ENCODE measurements at regions of chr18 and their contacts with region 1.

Region 1: GRCh38 chr18:65257157-65257556 is 493.7 kb upstream of the CDH7 start:
- DNase-seq: no peak
- ATAC-seq: no peak
- H3K4me3 ChIP-seq: no peak overlapping the region
- H3K27ac ChIP-seq: no peak overlapping the region
- H3K4me1 ChIP-seq: no peaks in the 10 kb centered on the region
- H3K27me3 ChIP-seq: no peaks in the 10 kb centered on the region
- CTCF ChIP-seq: no peak

Region 2: DNA sequence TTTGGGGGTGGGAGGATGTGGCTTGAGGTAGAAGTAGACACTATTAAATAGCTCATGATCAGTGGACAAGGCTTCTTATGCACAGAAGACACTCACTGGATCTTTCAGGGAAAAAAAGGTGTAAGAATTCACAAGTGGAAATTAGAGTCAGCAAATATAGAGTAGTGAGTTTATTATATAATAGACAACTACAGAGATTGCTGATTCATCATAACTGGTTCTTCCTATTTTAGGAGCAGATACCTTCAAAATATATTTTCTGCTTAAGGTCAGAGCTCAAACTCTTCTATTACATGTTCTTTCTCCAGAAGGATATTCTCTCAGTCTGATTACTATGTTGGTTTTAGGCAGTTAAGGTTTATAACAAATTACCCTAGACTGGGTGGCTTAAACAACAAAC is 153.3 kb before region 1 on chr18:
- intact Hi-C with region 1: no loop called
- DNase-seq: no peak
- ATAC-seq: no peak
- H3K4me3 ChIP-seq: no peak overlapping the region
- H3K27ac ChIP-seq: no peak overlapping the region
- H3K4me1 ChIP-seq: no peaks in the 10 kb centered on the region
- H3K27me3 ChIP-seq: no peaks in the 10 kb centered on the region
- CTCF ChIP-seq: no peak

Region 3: GRCh38 chr18:65202094-65202493 is 55.1 kb before region 1 on chr18:
- intact Hi-C with region 1: loop called in 1 of 10 experiments (anchors 10 kb)
- DNase-seq: no peak
- ATAC-seq: no peak
- H3K4me3 ChIP-seq: no peak overlapping the region
- H3K27ac ChIP-seq: no peak overlapping the region
- H3K4me1 ChIP-seq: no peaks in the 10 kb centered on the region
- H3K27me3 ChIP-seq: no peaks in the 10 kb centered on the region
- CTCF ChIP-seq: no peak

Measured in heart right ventricle (tissue), 16 donors.